ENCODE measurements at regions of chr14 and their contacts with region 1.

Region 1: GRCh38 chr14:67395876-67396189 is 16.1 kb downstream of the PLEK2 start:
- DNase-seq: no peak
- ATAC-seq: no peak
- H3K4me3 Mint-ChIP-seq: no peak overlapping the region
- H3K27ac Mint-ChIP-seq: no peak overlapping the region
- H3K4me1 Mint-ChIP-seq: no peaks in the 10 kb centered on the region
- H3K27me3 Mint-ChIP-seq: peaks cover 14% of the 10 kb centered on the region
- CTCF ChIP-seq: no peak

Region 2: DNA sequence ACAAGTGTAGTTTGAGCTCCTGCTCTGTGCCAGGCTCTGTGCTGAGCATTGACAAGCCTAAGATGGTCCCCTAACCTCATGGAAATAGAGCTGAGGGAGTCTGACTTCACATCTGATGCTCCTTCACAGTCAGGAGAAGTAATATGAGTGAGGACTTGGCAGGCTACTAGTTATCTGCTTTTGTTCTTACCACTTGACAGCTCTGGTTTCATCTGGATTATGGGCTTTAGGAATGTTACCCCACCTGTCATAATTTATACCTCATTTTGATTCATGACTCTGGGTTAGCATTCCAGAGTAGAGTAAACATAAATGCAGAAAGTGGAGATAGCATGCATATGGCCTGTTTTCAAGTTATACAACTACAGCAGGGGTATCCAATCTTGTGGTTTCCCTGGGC is 76.7 kb before region 1 on chr14:
- CTCF ChIA-PET with region 1: no interaction called
- POLR2A ChIA-PET with region 1: no interaction called
- intact Hi-C with region 1: no loop called
- DNase-seq: no peak
- ATAC-seq: no peak
- H3K4me3 Mint-ChIP-seq: no peak overlapping the region
- H3K27ac Mint-ChIP-seq: no peak overlapping the region
- H3K4me1 Mint-ChIP-seq: no peaks in the 10 kb centered on the region
- H3K27me3 Mint-ChIP-seq: no peaks in the 10 kb centered on the region
- CTCF ChIP-seq: no peak

Region 3: GRCh38 chr14:67370830-67371229 is 25.0 kb before region 1 on chr14:
- CTCF ChIA-PET with region 1: no interaction called
- POLR2A ChIA-PET with region 1: no interaction called
- intact Hi-C with region 1: loop called (anchors 1 kb)
- DNase-seq: no peak
- ATAC-seq: no peak
- H3K4me3 Mint-ChIP-seq: no peak overlapping the region
- H3K27ac Mint-ChIP-seq: no peak overlapping the region
- H3K4me1 Mint-ChIP-seq: peaks cover 4% of the 10 kb centered on the region
- H3K27me3 Mint-ChIP-seq: no peaks in the 10 kb centered on the region
- CTCF ChIP-seq: no peak